ENCODE measurements at regions of chr1 and their contacts with region 1.

Region 1: DNA sequence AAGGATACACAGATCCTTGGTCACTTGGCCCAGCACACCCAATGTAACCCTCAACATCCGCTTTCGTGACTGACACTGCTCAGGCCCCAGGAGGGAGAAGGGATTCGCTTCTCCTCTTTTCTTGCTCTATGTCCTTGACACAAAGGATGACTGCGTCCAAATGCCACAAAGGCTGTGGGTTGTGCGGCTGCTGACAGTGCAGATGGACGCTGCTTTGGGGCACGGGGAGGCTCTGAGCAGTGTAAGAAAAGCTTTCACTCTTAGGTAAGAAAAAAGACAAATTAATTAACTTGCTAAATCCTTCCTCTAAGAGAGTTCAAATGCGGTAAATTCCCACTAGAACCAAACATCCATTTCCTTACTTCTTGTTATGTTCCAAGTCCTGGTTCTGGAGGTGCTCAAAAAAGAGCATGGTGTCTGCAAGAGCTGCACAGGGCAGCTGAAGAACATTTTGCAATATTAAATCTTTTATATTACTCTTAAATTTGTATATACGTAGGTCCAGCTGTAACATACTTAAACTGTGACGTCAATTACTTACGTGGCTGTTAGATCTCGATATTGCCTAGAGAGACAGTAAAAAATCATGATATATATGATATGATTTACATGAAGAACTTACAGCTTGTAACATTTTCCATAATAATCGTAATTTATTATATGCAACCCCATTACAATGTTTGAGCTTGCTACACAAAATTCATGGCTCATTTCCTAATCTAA is 19.4 kb upstream of the EPHB2 start:
- DNase-seq: no peak
- ATAC-seq: no peak
- H3K4me3 ChIP-seq: no peak overlapping the region
- H3K4me3 Mint-ChIP-seq: no peak overlapping the region
- H3K27ac ChIP-seq: no peak overlapping the region
- H3K27ac Mint-ChIP-seq: no peak overlapping the region
- H3K4me1 ChIP-seq: no peaks in the 10 kb centered on the region
- H3K4me1 Mint-ChIP-seq: no peaks in the 10 kb centered on the region
- H3K27me3 ChIP-seq: no peaks in the 10 kb centered on the region
- H3K27me3 Mint-ChIP-seq: peaks cover 15% of the 10 kb centered on the region
- CTCF ChIP-seq: no peak

Region 2: GRCh38 chr1:22341791-22342605 is 349.2 kb before region 1 on chr1:
- CTCF ChIA-PET with region 1: no interaction called
- POLR2A ChIA-PET with region 1: no interaction called
- intact Hi-C with region 1: no loop called
- DNase-seq: no peak
- ATAC-seq: no peak
- H3K4me3 ChIP-seq: no peak overlapping the region
- H3K4me3 Mint-ChIP-seq: no peak overlapping the region
- H3K27ac ChIP-seq: no peak overlapping the region
- H3K27ac Mint-ChIP-seq: no peak overlapping the region
- H3K4me1 ChIP-seq: no peaks in the 10 kb centered on the region
- H3K4me1 Mint-ChIP-seq: peaks cover 2% of the 10 kb centered on the region
- H3K27me3 ChIP-seq: peaks cover 0 to 9% of the 10 kb centered on the region in 2 experiments
- H3K27me3 Mint-ChIP-seq: peaks cover 52% of the 10 kb centered on the region
- CTCF ChIP-seq: no peak

Region 3: DNA sequence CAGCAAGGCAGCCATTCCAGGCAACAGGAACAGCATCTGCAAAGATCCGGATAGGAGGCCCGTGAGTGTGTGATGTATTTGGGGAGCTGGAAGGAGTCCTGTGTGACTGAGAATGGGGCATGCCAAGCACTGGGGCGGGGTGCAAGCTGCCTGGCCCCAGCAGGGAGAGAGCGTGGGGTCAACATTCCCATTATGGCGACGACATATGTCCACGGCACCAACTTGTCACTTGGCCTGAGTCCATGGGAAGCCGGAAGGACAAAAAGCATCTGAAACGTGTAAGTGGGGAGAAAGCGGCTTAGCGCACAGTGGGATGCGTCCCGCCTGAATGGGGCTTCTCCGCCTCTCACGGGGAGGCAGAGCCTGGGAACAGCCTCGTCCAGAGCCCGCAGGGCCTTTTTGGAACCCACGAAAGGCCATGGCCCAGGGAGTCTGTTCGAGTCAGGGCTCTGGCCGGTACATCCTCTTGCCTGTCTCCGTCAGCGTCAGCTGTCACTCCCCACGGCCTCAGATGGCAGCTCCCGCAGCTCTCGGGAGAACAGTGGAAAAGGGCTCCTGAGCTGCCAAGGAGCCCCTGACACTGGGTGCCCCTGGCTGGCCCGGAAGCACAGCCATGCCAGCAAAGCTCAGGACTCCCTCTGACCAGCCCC is 31.8 kb after region 1 on chr1:
- CTCF ChIA-PET with region 1: no interaction called
- POLR2A ChIA-PET with region 1: no interaction called
- intact Hi-C with region 1: loop called in 1 of 2 experiments (anchors 2 kb)
- DNase-seq: no peak
- ATAC-seq: no peak
- H3K4me3 ChIP-seq: no peak overlapping the region
- H3K4me3 Mint-ChIP-seq: no peak overlapping the region
- H3K27ac ChIP-seq: no peak overlapping the region
- H3K27ac Mint-ChIP-seq: no peak overlapping the region
- H3K4me1 ChIP-seq: no peaks in the 10 kb centered on the region
- H3K4me1 Mint-ChIP-seq: no peaks in the 10 kb centered on the region
- H3K27me3 ChIP-seq: no peaks in the 10 kb centered on the region
- H3K27me3 Mint-ChIP-seq: peaks cover 19% of the 10 kb centered on the region
- CTCF ChIP-seq: no peak